Naive thymus-derived CD4-positive, alpha-beta T cell (primary cell): ENCODE measurements at regions of chrX and their contacts with region 1.

Region 1: DNA sequence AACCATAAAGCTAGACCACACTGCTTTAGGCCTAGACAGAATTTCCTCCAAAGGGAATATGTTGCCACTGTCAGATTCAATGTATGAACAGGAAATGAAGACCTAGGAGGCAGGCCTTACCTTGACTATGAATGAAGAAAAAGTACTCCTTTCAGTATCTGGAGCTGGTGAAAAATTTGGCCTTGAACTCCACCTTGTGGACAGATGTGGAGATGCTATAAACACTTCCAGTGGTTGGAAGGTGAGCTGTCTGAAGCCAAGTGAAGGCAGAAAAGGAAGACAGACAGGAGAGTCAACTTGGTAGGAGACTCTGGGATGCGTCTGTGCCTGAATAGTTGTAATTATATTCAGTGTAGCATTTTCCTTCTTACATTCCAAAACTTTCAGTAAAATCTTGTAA is 17.2 kb downstream of the SPIN3 start:
- DNase-seq: peak in 8 of 9 donors; percentile 19 to 72 (median 56)
- ATAC-seq: peak; percentile 72
- H3K4me3 ChIP-seq: no peak overlapping the region
- H3K4me3 Mint-ChIP-seq: no peak overlapping the region
- H3K27ac ChIP-seq: no peak overlapping the region
- H3K27ac Mint-ChIP-seq: peak overlapping the region in 5 of 9 donors; percentile 4 to 75 (median 27)
- H3K4me1 ChIP-seq: no peaks in the 10 kb centered on the region
- H3K4me1 Mint-ChIP-seq: peaks cover 0 to 6% (median 0%) of the 10 kb centered on the region in 7 donors
- H3K27me3 ChIP-seq: no peaks in the 10 kb centered on the region
- H3K27me3 Mint-ChIP-seq: no peaks in the 10 kb centered on the region

Region 2: DNA sequence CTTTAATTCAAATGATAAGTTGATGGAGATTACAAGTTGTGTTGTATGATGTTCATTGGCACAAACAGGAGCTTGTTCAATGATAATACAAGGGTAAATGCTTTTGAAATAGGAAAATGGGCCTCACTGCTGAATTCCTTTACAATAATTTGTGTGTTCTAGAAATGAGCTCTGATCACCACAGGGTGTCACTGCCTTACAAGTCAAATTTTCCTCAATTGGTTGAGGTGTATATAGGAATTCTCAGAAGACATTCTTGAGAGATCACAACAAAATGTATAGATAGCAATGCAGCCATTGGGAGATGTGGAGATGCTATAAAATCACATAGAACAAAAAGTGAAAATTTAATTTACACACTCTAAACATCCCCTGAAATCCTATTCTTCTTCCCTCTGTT is 696.4 kb before region 1 on chrX:
- CTCF ChIA-PET with region 1: interaction called, 7 read pairs
- POLR2A ChIA-PET with region 1: no interaction called
- intact Hi-C with region 1: loop called in 1 of 2 experiments (anchors 1 kb)
- DNase-seq: peak in 7 of 9 donors; percentile 15 to 60 (median 46)
- ATAC-seq: peak; percentile 55
- H3K4me3 ChIP-seq: no peak overlapping the region
- H3K4me3 Mint-ChIP-seq: peak overlapping the region in 3 of 10 donors; percentile 3 to 41 (median 14)
- H3K27ac ChIP-seq: no peak overlapping the region
- H3K27ac Mint-ChIP-seq: peak overlapping the region in 2 of 9 donors; percentile 40 to 70
- H3K4me1 ChIP-seq: peaks cover 0 to 3% of the 10 kb centered on the region in 2 donors
- H3K4me1 Mint-ChIP-seq: peaks cover 2 to 14% (median 10%) of the 10 kb centered on the region in 7 donors
- H3K27me3 ChIP-seq: no peaks in the 10 kb centered on the region
- H3K27me3 Mint-ChIP-seq: no peaks in the 10 kb centered on the region

Region 3: GRCh38 chrX:57121162-57121741 is 143.1 kb after region 1 on chrX and contains the start of gene SPIN2B:
- CTCF ChIA-PET with region 1: no interaction called
- POLR2A ChIA-PET with region 1: no interaction called
- intact Hi-C with region 1: loop called in 1 of 2 experiments (anchors 5 kb)
- DNase-seq: peak; percentile 27 to 76 (median 68)
- ATAC-seq: peak; percentile 99
- H3K4me3 ChIP-seq: peak within 1 kb of the TSS; percentile 57
- H3K4me3 Mint-ChIP-seq: peak within 1 kb of the TSS; percentile 90 to 95 (median 93)
- H3K27ac ChIP-seq: peak within 1 kb of the TSS; percentile 62
- H3K27ac Mint-ChIP-seq: peak within 1 kb of the TSS; percentile 72 to 96 (median 91)
- H3K4me1 ChIP-seq: no peaks in the 10 kb centered on the region
- H3K4me1 Mint-ChIP-seq: peaks cover 5 to 14% (median 11%) of the 10 kb centered on the region in 7 donors
- H3K27me3 ChIP-seq: no peaks in the 10 kb centered on the region
- H3K27me3 Mint-ChIP-seq: no peaks in the 10 kb centered on the region
- total RNA-seq, gene SPIN2B: 9.0 to 19.7 (median 14.0) TPM

Region 4: GRCh38 chrX:57900975-57901374 is 922.8 kb after region 1 on chrX:
- CTCF ChIA-PET with region 1: no interaction called
- POLR2A ChIA-PET with region 1: no interaction called
- intact Hi-C with region 1: loop called in 1 of 2 experiments (anchors 10 kb)
- DNase-seq: no peak
- ATAC-seq: no peak
- H3K4me3 ChIP-seq: no peak overlapping the region
- H3K4me3 Mint-ChIP-seq: no peak overlapping the region
- H3K27ac ChIP-seq: no peak overlapping the region
- H3K27ac Mint-ChIP-seq: no peak overlapping the region
- H3K4me1 ChIP-seq: no peaks in the 10 kb centered on the region
- H3K4me1 Mint-ChIP-seq: peaks cover 1 to 15% (median 5%) of the 10 kb centered on the region in 7 donors
- H3K27me3 ChIP-seq: no peaks in the 10 kb centered on the region
- H3K27me3 Mint-ChIP-seq: no peaks in the 10 kb centered on the region

Region 5: DNA sequence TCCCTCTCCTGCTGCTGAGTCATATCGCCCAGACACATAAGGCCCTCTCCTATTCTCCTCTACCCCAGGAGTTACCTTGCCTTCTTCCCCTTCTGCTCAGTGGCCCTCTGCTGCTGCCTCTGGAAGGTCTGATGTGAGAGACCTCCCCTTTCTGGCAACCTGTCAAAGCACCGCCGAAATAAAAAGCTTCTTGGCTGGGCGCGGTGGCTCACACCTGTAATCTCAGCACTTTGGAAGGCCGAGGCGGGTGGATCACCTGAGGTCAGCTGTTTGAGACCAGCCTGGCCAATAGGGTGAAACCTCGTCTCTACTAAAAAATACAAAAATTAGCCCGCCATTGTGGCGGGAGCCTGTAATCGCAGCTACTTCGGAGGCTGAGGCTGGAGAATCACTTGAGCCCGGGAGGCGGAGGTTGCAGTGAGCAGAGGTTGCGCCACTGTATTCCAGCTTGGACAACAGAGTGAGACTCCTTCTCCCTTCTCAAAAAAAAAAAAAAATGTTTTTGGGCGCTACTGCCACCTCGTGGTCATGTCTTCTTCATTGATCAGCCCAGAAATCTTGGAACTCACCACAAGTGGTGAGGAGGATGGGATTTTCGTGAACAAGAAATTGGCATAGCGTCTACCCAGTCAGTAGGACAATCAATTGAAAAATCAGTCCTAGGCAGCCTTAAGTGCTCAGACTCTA is 940.7 kb after region 1 on chrX:
- CTCF ChIA-PET with region 1: no interaction called
- POLR2A ChIA-PET with region 1: no interaction called
- intact Hi-C with region 1: loop called in 1 of 2 experiments (anchors 5 kb)
- DNase-seq: peak in 6 of 9 donors; percentile 13 to 37 (median 29)
- ATAC-seq: peak; percentile 54
- H3K4me3 ChIP-seq: no peak overlapping the region
- H3K4me3 Mint-ChIP-seq: no peak overlapping the region
- H3K27ac ChIP-seq: no peak overlapping the region
- H3K27ac Mint-ChIP-seq: peak overlapping the region in 1 of 9 donors; percentile 25
- H3K4me1 ChIP-seq: no peaks in the 10 kb centered on the region
- H3K4me1 Mint-ChIP-seq: no peaks in the 10 kb centered on the region
- H3K27me3 ChIP-seq: no peaks in the 10 kb centered on the region
- H3K27me3 Mint-ChIP-seq: no peaks in the 10 kb centered on the region